Activated B cell treated with CpG ODN at 0.5 μM for 24 hours (primary cell): ENCODE measurements at regions of chr2 and their contacts with region 1.

Region 1: DNA sequence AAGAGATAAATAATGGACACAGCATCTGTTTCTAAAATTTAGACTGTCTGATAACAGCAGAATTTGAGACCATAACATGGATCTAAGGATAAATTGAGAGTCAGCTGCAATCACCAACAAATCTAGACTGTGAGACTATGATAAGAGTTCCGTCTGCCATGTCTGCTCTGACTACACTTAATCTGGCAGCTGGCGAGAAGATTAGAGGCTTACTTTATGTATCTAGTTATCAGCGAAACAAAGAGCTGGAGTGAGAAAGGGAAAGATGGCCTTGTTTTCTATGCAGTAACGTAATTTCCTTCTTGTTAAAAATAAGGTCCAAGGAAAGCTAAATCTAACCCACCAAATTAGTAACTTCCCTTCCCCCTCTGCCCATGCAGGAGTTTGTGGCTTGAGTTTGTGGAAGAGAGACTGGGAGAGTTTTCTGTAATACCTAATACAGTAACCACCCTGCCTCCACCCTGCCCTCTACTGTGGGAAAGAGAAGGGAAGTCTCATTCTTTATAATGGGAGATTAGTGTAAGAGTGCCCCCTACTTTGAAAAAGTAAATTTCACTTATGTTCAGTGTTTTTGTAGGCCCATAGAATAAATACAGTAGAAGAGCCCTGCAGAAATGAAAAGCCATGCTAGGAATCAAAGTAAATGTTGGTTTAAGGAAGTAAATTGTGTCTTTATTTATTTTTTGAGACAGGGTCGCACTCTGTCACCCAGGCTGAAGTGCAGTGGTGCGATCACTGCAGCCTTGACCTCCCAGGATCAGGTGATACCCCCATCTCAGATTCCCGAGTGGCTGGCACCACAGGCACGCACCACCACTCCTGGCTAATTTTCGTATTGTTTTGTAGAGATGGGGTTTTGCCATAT is 27.5 kb downstream of the EML4 start:
- DNase-seq: no peak
- ATAC-seq: peak; percentile 89
- H3K4me3 Mint-ChIP-seq: peak overlapping the region; percentile 15
- H3K27ac Mint-ChIP-seq: peak overlapping the region; percentile 50
- H3K4me1 Mint-ChIP-seq: peaks cover 77% of the 10 kb centered on the region
- H3K27me3 Mint-ChIP-seq: no peaks in the 10 kb centered on the region
- CTCF ChIP-seq: no peak

Region 2: DNA sequence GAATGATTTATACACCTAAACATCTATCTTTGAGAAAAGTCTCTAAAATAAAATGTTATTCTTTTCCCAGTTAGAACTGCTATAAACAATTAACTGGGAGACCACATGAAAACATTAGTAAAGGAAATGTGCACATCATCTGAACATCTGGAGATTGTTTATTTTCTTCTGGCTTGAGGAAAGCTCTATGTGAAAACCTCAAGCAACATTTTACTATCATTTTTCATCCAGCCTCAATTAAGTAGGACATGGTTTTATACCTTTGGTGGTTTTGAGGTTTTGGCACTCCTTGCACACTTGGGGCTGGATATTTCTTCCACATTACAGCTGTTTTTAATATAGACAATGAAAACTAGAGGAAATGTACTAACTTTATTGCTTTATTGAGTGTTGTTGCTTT is 1135.3 kb before region 1 on chr2:
- CTCF ChIA-PET with region 1: no interaction called
- POLR2A ChIA-PET with region 1: no interaction called
- intact Hi-C with region 1: no loop called
- DNase-seq: no peak
- ATAC-seq: no peak
- H3K4me3 Mint-ChIP-seq: no peak overlapping the region
- H3K27ac Mint-ChIP-seq: no peak overlapping the region
- H3K4me1 Mint-ChIP-seq: no peaks in the 10 kb centered on the region
- H3K27me3 Mint-ChIP-seq: no peaks in the 10 kb centered on the region
- CTCF ChIP-seq: no peak

Region 3: DNA sequence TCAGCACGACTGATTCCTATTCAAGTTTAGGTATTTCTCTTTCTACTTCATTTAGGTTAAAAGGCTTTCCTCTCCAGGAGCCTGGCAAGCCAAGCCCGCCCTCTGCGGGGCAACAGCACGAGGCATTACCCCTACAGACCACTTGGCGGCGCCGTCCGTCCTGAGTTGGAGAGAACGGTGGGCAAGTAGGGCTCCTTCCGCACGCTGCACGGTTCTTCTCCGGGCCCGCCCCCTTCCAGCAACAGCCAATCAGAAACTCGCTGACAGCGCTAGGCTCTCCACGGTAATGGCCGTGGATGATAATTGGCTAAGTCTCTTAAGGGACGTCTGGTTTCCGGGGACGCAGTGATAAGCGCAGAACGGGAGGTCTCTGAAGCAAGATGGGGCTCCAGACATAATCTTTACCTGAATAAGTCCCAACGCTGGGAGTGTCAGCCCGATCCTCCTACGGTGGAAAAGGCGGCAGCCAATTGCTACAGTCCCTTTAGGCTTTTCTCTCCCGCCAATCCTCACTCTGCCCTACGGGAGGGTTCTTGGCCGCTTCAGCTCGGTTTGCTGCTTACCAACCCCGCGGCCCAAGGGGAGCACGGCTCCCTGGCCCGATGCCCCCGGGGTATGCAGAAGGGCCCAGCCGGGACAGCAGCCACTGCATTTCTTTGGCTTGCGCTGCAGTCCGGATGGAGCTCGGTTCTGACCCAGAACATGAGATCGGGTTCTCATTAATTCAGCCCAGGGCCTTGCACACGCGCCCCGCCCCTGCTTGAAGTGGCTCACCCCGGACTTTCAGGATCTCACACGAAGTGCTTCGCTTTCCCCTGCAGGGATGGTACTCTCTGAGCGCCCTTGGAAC is 355.7 kb before region 1 on chr2:
- CTCF ChIA-PET with region 1: no interaction called
- POLR2A ChIA-PET with region 1: no interaction called
- intact Hi-C with region 1: loop called (anchors 2 kb)
- DNase-seq: peak; percentile 88
- ATAC-seq: peak; percentile 98
- H3K4me3 Mint-ChIP-seq: peak overlapping the region; percentile 89
- H3K27ac Mint-ChIP-seq: peak overlapping the region; percentile 82
- H3K4me1 Mint-ChIP-seq: peaks cover 13% of the 10 kb centered on the region
- H3K27me3 Mint-ChIP-seq: peaks cover 24% of the 10 kb centered on the region
- CTCF ChIP-seq: peak; percentile 78

Region 4: GRCh38 chr2:41955316-41956043 is 241.2 kb before region 1 on chr2:
- CTCF ChIA-PET with region 1: no interaction called
- POLR2A ChIA-PET with region 1: no interaction called
- intact Hi-C with region 1: loop called (anchors 10 kb)
- DNase-seq: no peak
- ATAC-seq: peak; percentile 54
- H3K4me3 Mint-ChIP-seq: no peak overlapping the region
- H3K27ac Mint-ChIP-seq: peak overlapping the region; percentile 51
- H3K4me1 Mint-ChIP-seq: peaks cover 38% of the 10 kb centered on the region
- H3K27me3 Mint-ChIP-seq: peaks cover 2% of the 10 kb centered on the region
- CTCF ChIP-seq: no peak

Region 5: DNA sequence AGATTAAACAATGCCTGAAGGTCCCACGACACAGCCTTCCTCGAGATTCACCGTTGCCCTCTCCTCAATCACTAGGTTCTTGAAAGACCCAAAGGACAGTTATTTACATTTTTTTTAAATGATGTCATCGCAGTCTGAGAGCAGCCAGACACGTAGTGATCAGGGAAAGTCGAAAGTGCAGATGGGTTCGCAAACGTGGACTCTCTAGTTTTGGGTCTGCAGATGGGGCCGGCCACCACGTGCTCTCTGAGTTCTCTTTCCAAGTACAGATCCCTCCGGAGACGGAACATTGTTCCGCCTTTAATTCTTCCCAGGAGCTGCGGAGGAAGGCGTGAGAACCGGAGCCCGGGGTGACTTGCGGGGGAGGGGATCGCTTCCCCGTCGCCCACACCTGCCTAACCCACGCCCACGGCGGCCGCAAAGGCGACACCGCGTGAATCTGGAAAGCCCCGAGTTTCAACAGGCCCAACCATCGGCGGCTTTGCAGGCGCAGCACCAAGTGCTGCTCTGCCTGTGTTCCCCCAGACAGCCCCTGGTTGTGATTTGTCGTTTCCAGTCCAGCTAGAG is 94.5 kb before region 1 on chr2:
- CTCF ChIA-PET with region 1: interaction called, 104 read pairs
- POLR2A ChIA-PET with region 1: interaction called, 4 read pairs
- intact Hi-C with region 1: no loop called
- DNase-seq: peak; percentile 88
- ATAC-seq: peak; percentile 72
- H3K4me3 Mint-ChIP-seq: peak overlapping the region; percentile 88
- H3K27ac Mint-ChIP-seq: no peak overlapping the region
- H3K4me1 Mint-ChIP-seq: peaks cover 47% of the 10 kb centered on the region
- H3K27me3 Mint-ChIP-seq: no peaks in the 10 kb centered on the region
- CTCF ChIP-seq: no peak

Region 6: GRCh38 chr2:42169100-42169873 is 27.3 kb before region 1 on chr2 and contains the start of gene EML4:
- CTCF ChIA-PET with region 1: interaction called, 15 read pairs
- POLR2A ChIA-PET with region 1: interaction called, 3 read pairs
- intact Hi-C with region 1: loop called (anchors 1 kb)
- DNase-seq: peak; percentile 97
- ATAC-seq: peak; percentile 88
- H3K4me3 Mint-ChIP-seq: no peak within 1 kb of the TSS
- H3K27ac Mint-ChIP-seq: no peak within 1 kb of the TSS
- H3K4me1 Mint-ChIP-seq: peaks cover 26% of the 10 kb centered on the region
- H3K27me3 Mint-ChIP-seq: no peaks in the 10 kb centered on the region
- CTCF ChIP-seq: no peak
- total RNA-seq, gene EML4: 83.2 and 95.8 TPM in 2 replicates

Region 7: GRCh38 chr2:42274863-42275262 is 78.2 kb after region 1 on chr2:
- CTCF ChIA-PET with region 1: no interaction called
- POLR2A ChIA-PET with region 1: no interaction called
- intact Hi-C with region 1: no loop called
- DNase-seq: no peak
- ATAC-seq: no peak
- H3K4me3 Mint-ChIP-seq: no peak overlapping the region
- H3K27ac Mint-ChIP-seq: peak overlapping the region; percentile 32
- H3K4me1 Mint-ChIP-seq: no peaks in the 10 kb centered on the region
- H3K27me3 Mint-ChIP-seq: no peaks in the 10 kb centered on the region
- CTCF ChIP-seq: no peak